ENCODE measurements at regions of chr6 and their contacts with region 1.

Region 1: DNA sequence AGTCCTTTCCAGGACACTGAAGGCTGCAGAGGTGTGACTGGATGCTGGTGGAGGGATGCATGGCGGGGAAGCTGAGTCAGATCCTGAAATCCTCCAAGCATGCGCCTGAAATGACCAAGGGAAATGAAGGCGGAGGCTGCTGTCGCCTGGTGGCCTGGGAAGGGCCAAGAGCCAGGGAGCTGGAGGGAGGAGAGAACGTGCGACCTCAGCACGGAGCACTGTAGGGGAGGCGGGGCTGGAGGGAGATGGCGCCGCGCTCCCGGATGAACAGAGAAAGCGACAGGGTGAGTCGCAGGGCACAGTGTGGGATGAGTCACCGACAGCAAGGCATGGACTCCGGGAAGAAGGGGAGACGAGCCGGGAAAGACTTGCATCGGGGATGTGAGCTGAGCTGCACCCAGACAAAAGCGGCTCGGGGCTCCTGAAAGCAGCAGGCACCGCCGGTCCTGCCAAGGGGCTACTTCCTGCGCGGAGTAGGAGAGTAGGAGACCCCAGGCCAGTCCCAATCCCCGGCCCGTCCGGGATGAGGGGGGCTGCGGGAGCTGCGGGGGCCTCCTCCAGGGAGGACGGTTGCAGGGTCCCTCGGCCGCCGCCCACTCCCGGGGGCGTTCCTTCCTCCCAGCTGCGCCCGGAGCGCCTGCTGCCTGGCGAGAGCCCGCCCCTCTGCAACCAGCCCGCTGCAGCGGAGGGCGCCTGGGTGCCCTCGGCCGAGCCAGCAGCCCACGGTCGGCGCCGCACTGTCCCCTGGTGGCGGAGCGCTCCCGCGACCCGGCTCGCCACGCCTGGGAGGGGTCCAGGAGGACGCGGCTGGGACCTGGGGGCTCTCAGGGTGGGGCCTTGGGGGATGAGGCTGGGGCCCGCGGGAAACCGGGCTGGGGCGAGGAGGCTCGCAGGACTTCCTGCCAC is 11.0 kb upstream of the NQO2 start:
- DNase-seq: peak; percentile 87
- H3K4me3 Mint-ChIP-seq: peak overlapping the region; percentile 84
- H3K27ac Mint-ChIP-seq: peak overlapping the region; percentile 98
- H3K4me1 Mint-ChIP-seq: peaks cover 20% of the 10 kb centered on the region
- H3K27me3 Mint-ChIP-seq: no peaks in the 10 kb centered on the region

Region 2: DNA sequence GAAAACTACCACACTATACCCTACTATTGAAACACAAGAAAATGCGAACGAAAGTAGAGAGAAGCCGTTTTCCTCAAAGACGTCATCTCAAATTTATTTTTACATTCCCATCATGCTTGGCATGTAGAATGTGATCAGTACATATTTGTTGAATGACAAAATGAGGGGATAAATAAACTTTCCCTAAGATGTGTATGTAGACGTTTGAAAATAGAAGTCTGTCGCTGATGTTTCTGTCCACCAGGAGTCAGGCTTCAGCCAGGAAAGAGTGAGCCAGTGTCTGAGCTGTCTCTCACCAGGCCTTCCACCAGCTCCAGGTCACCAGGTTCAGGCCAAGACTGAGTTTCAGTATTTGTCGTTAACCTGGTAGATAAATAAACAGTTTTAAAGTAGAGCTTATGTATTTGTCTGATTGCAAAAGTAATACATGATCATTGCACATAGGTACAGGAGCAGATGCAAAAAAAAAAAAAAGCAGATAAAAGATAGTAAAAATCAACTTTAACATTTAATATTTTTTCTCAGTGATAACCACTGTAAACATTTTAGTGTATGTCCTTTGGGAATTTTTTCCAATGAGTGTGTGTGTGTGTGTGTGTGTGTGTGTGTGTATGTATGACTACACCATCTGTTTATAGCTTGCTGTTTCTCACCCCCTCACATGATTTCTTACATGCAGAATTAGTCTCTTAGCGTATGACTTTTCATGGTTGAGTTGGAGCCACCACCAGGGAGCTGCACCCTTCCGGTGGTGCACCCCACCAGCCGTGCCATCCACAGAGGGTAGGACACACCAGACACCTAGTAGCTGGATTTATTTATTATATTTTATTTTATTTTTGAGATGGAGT is 197.3 kb before region 1 on chr6:
- CTCF ChIA-PET with region 1: interaction called, 33 read pairs
- POLR2A ChIA-PET with region 1: interaction called, 4 read pairs
- intact Hi-C with region 1: loop called (anchors 1 kb)
- DNase-seq: peak; percentile 82
- H3K4me3 Mint-ChIP-seq: no peak overlapping the region
- H3K27ac Mint-ChIP-seq: no peak overlapping the region
- H3K4me1 Mint-ChIP-seq: peaks cover 34% of the 10 kb centered on the region
- H3K27me3 Mint-ChIP-seq: no peaks in the 10 kb centered on the region

Region 3: DNA sequence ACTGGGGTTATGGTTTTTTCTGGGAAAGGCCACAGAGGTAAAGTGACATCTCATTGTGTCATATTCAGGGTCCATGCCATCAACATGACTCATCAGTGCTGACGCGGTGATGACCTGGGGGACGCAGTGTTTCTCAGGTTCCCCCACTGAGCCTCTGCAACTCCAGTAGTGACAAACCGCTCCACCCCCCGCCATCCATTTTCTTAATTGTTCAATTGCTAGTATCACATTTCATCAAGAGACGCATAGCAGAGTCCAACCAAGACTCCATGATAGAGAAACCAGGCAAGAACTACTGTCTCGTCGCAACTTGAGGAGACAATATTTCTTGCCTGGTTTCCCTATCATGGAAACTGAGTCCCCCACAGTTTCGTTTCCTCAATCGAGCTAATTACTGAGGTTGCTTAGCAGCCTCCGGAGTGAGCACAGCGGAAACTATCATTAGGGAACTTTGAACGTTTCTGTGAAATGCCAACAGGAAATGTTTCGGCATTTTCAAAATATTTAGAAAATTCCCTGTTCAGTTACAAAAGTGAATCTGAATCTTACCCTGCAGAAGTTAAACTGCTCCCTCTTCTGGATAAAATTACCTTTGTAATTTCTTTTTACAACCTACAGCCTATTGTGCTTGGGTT is 134.8 kb before region 1 on chr6:
- CTCF ChIA-PET with region 1: interaction called, 84 read pairs
- POLR2A ChIA-PET with region 1: interaction called, 10 read pairs
- intact Hi-C with region 1: no loop called
- DNase-seq: peak; percentile 95
- H3K4me3 Mint-ChIP-seq: peak overlapping the region; percentile 63
- H3K27ac Mint-ChIP-seq: peak overlapping the region; percentile 100
- H3K4me1 Mint-ChIP-seq: peaks cover 65% of the 10 kb centered on the region
- H3K27me3 Mint-ChIP-seq: no peaks in the 10 kb centered on the region

Region 4: DNA sequence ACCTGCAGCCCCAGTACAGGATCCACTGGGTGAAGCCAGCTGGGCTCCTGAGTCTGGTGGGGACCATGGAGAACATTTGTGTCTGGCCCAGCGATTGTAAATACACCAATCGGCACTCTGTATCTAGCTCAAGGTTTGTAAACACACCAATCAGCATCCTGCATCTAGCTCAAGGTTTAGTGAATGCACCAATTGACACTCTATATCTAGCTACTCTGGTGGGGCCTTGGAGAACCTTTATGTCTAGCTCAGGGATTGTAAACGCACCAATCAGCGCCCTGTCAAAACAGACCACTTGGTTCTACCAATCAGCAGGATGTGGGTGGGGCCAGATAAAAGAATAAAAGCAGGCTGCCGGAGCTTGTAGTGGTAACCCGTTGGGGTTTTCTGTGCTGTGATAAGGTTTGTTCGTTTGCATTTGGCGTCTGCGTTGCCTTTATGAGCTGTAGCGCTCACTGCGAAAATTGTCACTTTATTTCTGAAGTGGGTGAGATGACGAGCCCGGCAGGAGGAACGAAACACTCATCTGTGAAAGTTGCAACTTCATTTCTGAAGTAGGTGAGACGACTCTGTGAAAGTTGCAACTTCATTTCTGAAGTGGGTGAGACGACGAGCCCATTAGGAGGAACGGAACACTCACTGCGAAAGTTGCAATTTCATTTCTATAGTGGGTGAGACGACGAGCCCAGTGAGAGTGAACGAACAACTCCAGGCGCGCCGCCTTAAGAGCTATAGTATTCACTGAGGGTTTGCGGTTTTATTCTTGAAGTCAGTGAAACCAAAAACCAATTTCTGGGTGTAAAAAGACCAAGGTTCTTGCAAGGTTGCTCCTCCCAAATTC is 48.4 kb before region 1 on chr6:
- CTCF ChIA-PET with region 1: interaction called, 12 read pairs
- POLR2A ChIA-PET with region 1: interaction called, 33 read pairs
- intact Hi-C with region 1: loop called (anchors 1 kb)
- DNase-seq: peak; percentile 92
- H3K4me3 Mint-ChIP-seq: peak overlapping the region; percentile 54
- H3K27ac Mint-ChIP-seq: peak overlapping the region; percentile 99
- H3K4me1 Mint-ChIP-seq: peaks cover 67% of the 10 kb centered on the region
- H3K27me3 Mint-ChIP-seq: peaks cover 1% of the 10 kb centered on the region

Region 5: GRCh38 chr6:2976571-2977085 is 12.1 kb before region 1 on chr6:
- CTCF ChIA-PET with region 1: interaction called, 28 read pairs
- POLR2A ChIA-PET with region 1: interaction called, 11 read pairs
- intact Hi-C with region 1: loop called (anchors 2 kb)
- DNase-seq: peak; percentile 33
- H3K4me3 Mint-ChIP-seq: no peak overlapping the region
- H3K27ac Mint-ChIP-seq: peak overlapping the region; percentile 88
- H3K4me1 Mint-ChIP-seq: peaks cover 40% of the 10 kb centered on the region
- H3K27me3 Mint-ChIP-seq: peaks cover 8% of the 10 kb centered on the region

Region 6: GRCh38 chr6:3068329-3069214 is 79.9 kb after region 1 on chr6 and contains the start of gene RIPK1:
- CTCF ChIA-PET with region 1: interaction called, 18 read pairs
- POLR2A ChIA-PET with region 1: interaction called, 17 read pairs
- intact Hi-C with region 1: no loop called
- DNase-seq: peak; percentile 96
- H3K4me3 Mint-ChIP-seq: peak within 1 kb of the TSS; percentile 96
- H3K27ac Mint-ChIP-seq: peak within 1 kb of the TSS; percentile 98
- H3K4me1 Mint-ChIP-seq: peaks cover 62% of the 10 kb centered on the region
- H3K27me3 Mint-ChIP-seq: no peaks in the 10 kb centered on the region
- total RNA-seq, gene RIPK1: 18.5 to 18.6 TPM